HAP-1 (cell line): ENCODE measurements at regions of chr4 and their contacts with region 1.

Region 1: GRCh38 chr4:6327041-6327917 is 57.6 kb downstream of the WFS1 start:
- DNase-seq: peak; percentile 39 to 86
- H3K4me3 ChIP-seq: no peak overlapping the region
- H3K4me1 ChIP-seq: no peaks in the 10 kb centered on the region; the same call in 1 of the 2 replicates
- H3K27me3 ChIP-seq: no peaks in the 10 kb centered on the region

Region 2: DNA sequence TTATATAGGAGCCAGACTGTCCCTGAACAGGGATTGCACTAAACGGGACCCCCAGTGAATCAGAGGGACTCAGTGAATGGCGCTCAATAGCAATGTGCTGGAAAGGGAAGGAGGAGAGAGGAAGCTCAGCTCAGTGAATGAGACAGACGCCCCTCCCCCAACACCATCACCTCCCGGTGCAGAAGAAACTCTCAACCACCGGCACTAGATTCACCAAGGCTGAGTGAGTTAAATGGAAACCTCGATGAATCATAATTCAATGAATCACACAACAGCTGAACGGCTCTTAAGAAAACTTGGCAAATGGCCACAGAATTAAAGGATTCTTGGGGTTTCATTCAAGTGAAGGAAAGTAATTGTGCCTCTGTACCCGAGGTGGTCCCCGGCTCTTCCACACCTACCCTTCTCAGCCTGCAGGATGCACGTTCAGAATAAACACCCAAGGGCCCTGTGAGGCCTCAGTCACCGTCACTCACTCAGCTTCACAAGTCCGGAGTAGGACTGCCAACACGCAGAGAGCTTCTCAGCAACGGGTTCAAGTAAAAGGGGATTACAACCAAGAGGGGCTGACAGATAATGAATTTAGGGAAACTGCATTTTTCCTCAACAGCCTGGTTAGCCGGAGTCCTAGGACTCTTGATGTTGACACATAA is 463.7 kb before region 1 on chr4:
- in situ Hi-C with region 1: no loop called
- DNase-seq: no peak
- H3K4me3 ChIP-seq: no peak overlapping the region
- H3K4me1 ChIP-seq: no peaks in the 10 kb centered on the region
- H3K27me3 ChIP-seq: no peaks in the 10 kb centered on the region

Region 3: GRCh38 chr4:5963611-5964010 is 363.7 kb before region 1 on chr4:
- in situ Hi-C with region 1: no loop called
- DNase-seq: no peak
- H3K4me3 ChIP-seq: no peak overlapping the region
- H3K4me1 ChIP-seq: no peaks in the 10 kb centered on the region
- H3K27me3 ChIP-seq: peaks cover 8% of the 10 kb centered on the region; the same call in 1 of the 2 replicates

Region 4: DNA sequence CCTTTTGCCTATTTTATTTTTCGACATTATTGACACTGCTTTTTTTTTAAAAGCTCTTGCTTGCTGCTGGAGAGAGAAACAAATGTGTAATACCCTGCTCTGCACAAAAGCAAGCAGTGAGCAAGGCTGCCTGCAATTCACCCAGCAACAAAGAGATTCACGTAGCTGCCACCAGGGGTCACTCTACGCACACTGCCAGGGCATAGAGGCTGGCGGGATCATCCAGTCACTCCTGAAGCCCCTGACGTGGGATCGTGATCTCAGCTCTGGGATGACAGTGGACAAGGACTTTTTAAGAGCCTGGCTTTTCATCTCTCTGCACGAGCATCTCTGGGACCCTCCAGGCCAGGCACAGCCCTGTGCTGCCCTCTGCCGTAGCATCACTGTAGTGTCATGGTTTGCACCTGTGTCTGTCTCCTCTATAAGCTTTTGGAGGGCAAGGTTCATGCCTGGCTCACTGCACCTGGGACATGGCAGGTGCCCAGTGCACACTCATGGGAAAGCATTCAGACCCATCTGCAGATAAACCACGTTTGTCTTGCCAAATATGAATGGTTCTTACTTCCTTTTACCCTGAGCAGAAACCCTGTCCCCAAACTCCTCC is 328.8 kb before region 1 on chr4:
- in situ Hi-C with region 1: loop called (anchors 5 kb)
- DNase-seq: peak; percentile 49 to 77
- H3K4me3 ChIP-seq: no peak overlapping the region
- H3K4me1 ChIP-seq: no peaks in the 10 kb centered on the region
- H3K27me3 ChIP-seq: peaks cover 20% of the 10 kb centered on the region

Region 5: DNA sequence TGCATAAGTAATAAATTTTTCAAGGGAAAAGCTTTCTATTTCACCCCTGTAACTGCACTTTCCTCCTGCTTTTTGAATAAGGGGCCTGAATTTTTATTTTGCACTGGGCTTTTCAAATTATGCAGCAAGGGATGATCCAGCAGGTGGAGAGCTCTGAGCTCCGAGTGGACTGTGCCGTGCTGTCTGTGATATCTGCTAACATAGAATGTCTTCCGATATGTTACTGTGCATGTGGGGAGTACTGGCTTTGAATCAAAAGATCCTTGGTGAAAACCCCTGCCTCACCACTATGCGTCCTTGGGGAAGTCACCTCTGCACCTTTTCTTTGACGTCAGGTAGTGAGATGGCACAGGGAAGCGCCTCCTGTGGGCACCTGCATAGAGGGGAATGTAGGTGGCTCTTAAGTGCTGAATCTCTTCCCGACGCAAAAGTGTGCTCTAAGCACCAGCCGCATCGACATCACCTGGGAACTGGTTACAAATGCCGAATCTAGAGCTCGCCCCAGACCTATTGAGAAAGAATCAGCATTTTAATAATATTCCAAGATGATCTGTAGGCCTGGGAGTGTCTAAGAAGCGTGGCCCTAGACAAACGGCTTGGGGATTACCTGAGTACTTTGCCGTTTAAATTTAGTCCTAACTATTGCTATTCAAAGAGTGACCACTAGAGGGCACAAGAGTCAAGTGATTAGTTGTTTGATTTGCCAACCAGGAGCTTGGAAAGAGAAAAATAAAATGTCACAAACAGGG is 76.9 kb before region 1 on chr4:
- in situ Hi-C with region 1: loop called (anchors 5 kb)
- DNase-seq: peak; percentile 42 to 49
- H3K4me3 ChIP-seq: no peak overlapping the region
- H3K4me1 ChIP-seq: no peaks in the 10 kb centered on the region
- H3K27me3 ChIP-seq: peaks cover 28% of the 10 kb centered on the region